K562 (cell line): ENCODE measurements at regions of chr7 and their contacts with region 1.

Region 1: DNA sequence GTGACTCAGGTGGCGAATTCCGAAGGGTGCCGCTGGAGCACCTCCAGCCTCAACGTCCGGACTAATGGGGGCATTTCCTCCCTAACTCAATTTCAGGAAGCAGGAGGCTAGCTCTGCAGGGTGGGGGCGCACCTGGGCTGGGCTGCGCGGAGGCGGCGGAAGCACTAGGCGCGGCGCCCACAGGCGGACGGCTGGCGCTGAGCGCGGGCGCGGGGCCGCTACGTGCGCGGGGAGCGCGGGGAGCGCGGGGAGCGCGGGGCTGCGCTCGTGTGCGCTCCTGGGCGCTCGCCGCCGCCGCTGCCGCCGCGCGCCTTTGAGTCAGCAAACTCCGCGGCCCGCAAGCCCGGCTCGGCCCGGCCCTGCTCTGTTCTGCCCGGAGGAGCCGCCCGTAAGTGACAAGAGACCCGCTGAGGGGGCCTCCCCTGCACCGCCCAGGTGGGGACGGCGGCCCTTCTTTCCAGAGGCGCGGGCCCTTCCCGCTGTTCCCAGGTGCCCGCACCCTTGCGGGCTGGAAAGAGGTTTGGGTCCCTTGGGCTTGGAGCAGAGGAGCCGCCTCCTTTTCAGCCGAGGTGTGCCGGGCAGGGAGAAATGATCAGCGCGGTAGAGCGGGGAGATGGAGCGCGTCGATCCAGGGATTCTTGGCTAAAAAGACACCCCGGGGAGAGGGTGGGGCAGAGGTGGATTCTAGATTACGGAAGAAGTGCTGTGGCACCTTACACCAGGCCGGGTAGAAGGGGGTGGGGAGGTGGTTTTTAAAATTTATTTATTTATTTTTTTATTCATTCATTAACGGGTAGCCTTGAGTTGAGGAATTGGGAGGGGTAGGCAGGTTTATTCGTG is at the start of gene SNX10:
- DNase-seq: peak; percentile 73 to 89 (median 78)
- ATAC-seq: peak; percentile 98
- H3K4me3 ChIP-seq: peak within 1 kb of the TSS; percentile 85
- H3K27ac ChIP-seq: peak within 1 kb of the TSS; percentile 71
- H3K4me1 ChIP-seq: peaks cover 11 to 19% of the 10 kb centered on the region in 2 experiments
- H3K27me3 ChIP-seq: no peaks in the 10 kb centered on the region
- CTCF ChIP-seq: peak; percentile 50 to 86 (median 79)
- EP300 ChIP-seq: no peak
- POLR2A ChIP-seq: peak; percentile 61; the same call in 1 of the 2 replicates
- RAD21 ChIP-seq: peak; percentile 61 to 76
- polyA plus RNA-seq, gene SNX10: 10.9 to 12.4 TPM

Region 2: GRCh38 chr7:26346611-26347203 is 54.8 kb after region 1 on chr7:
- CTCF ChIA-PET with region 1: no interaction called
- POLR2A ChIA-PET with region 1: no interaction called
- in situ Hi-C with region 1: no loop called
- intact Hi-C with region 1: loop called (anchors 5 kb)
- DNase-seq: no peak
- ATAC-seq: no peak
- H3K4me3 ChIP-seq: no peak overlapping the region
- H3K27ac ChIP-seq: no peak overlapping the region
- H3K4me1 ChIP-seq: no peaks in the 10 kb centered on the region
- H3K27me3 ChIP-seq: no peaks in the 10 kb centered on the region
- CTCF ChIP-seq: no peak
- EP300 ChIP-seq: no peak
- POLR2A ChIP-seq: no peak
- RAD21 ChIP-seq: no peak

Region 3: GRCh38 chr7:26365077-26365900 is 73.4 kb after region 1 on chr7:
- CTCF ChIA-PET with region 1: interaction called, 10 read pairs
- POLR2A ChIA-PET with region 1: no interaction called
- in situ Hi-C with region 1: no loop called
- intact Hi-C with region 1: loop called (anchors 1 kb)
- DNase-seq: peak; percentile 18 to 78 (median 30)
- ATAC-seq: peak; percentile 86
- H3K4me3 ChIP-seq: no peak overlapping the region
- H3K27ac ChIP-seq: no peak overlapping the region
- H3K4me1 ChIP-seq: no peaks in the 10 kb centered on the region; a peak in 1 of 5 replicates
- H3K27me3 ChIP-seq: no peaks in the 10 kb centered on the region
- CTCF ChIP-seq: peak; percentile 70 to 90 (median 71); a peak in 5 of 6 replicates
- EP300 ChIP-seq: no peak
- POLR2A ChIP-seq: no peak
- RAD21 ChIP-seq: peak; percentile 97 to 98